Natural killer cell (primary cell): ENCODE measurements at regions of chr12 and their contacts with region 1.

Region 1: GRCh38 chr12:8784489-8784888 is 37.9 kb upstream of the A2ML1 start:
- DNase-seq: no peak
- ATAC-seq: no peak
- H3K4me3 ChIP-seq: no peak overlapping the region
- H3K4me3 Mint-ChIP-seq: no peak overlapping the region
- H3K27ac ChIP-seq: no peak overlapping the region
- H3K27ac Mint-ChIP-seq: no peak overlapping the region
- H3K4me1 ChIP-seq: no peaks in the 10 kb centered on the region
- H3K4me1 Mint-ChIP-seq: no peaks in the 10 kb centered on the region
- H3K27me3 ChIP-seq: no peaks in the 10 kb centered on the region
- H3K27me3 Mint-ChIP-seq: no peaks in the 10 kb centered on the region
- CTCF ChIP-seq: no peak

Region 2: GRCh38 chr12:8796831-8797626 is 12.5 kb after region 1 on chr12:
- intact Hi-C with region 1: loop called (anchors 1 kb)
- DNase-seq: no peak
- ATAC-seq: no peak
- H3K4me3 ChIP-seq: no peak overlapping the region
- H3K4me3 Mint-ChIP-seq: no peak overlapping the region
- H3K27ac ChIP-seq: no peak overlapping the region
- H3K27ac Mint-ChIP-seq: no peak overlapping the region
- H3K4me1 ChIP-seq: no peaks in the 10 kb centered on the region
- H3K4me1 Mint-ChIP-seq: no peaks in the 10 kb centered on the region
- H3K27me3 ChIP-seq: peaks cover 2% of the 10 kb centered on the region
- H3K27me3 Mint-ChIP-seq: peaks cover 0 to 9% of the 10 kb centered on the region in 2 donors
- CTCF ChIP-seq: no peak

Region 3: GRCh38 chr12:8949342-8950220 is 165.1 kb after region 1 on chr12 and contains the start of gene M6PR:
- intact Hi-C with region 1: no loop called
- DNase-seq: peak; percentile 82 to 95
- ATAC-seq: peak; percentile 70 to 81 (median 79)
- H3K4me3 ChIP-seq: peak within 1 kb of the TSS; percentile 89
- H3K4me3 Mint-ChIP-seq: peak within 1 kb of the TSS; percentile 90
- H3K27ac ChIP-seq: peak within 1 kb of the TSS; percentile 99
- H3K27ac Mint-ChIP-seq: peak within 1 kb of the TSS; percentile 95 to 98
- H3K4me1 ChIP-seq: peaks cover 44% of the 10 kb centered on the region
- H3K4me1 Mint-ChIP-seq: peaks cover 75 to 88% of the 10 kb centered on the region in 2 donors
- H3K27me3 ChIP-seq: no peaks in the 10 kb centered on the region
- H3K27me3 Mint-ChIP-seq: no peaks in the 10 kb centered on the region
- CTCF ChIP-seq: peak; percentile 32
- total RNA-seq, gene M6PR: 245 to 270 (median 255) TPM